Adrenal gland (tissue), 19 donors: ENCODE measurements at regions of chr1 and their contacts with region 1.

Region 1: DNA sequence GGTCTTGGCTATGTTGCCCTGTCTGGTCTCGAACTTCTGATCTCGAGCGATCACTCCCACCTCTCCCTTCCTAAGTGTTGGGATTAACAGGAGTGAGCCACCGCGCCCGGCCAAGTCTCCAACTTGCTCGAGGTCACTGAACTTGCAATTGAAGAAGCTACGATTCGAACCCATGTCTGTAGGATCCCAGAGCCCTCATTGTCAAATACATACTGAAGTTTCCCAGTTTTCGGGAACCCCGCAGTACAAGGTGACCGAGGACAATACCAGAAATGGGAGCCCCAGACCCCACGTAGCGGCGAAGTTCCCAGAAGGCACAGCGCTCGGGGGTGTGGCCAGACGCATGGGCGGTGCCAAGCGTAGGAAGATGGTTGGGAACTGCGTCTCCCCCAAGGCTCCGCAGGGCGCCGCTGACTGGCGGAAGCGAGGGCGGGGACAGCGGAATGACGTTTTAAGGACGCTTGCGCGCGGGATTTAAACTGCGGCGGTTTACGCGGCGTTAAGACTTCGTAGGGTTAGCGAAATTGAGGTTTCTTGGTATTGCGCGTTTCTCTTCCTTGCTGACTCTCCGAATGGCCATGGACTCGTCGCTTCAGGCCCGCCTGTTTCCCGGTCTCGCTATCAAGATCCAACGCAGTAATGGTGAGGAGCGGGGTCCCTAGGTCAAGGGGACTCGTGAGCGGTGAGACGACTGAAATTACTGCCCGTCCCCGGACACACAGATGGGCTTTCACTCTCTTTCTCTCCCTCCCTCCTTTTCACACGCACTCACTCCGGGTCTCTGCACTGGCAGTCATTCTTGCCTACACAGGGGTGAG is at the start of gene KIF2C:
- DNase-seq: peak; percentile 95 to 98 (median 97)
- H3K4me3 ChIP-seq: peak within 1 kb of the TSS in 3 of 4 donors; percentile 1 to 69 (median 33)
- H3K27ac ChIP-seq: peak within 1 kb of the TSS in 4 of 5 donors; percentile 61 to 92 (median 89)
- H3K4me1 ChIP-seq: peaks cover 6 to 11% of the 10 kb centered on the region in 2 donors
- H3K27me3 ChIP-seq: no peaks in the 10 kb centered on the region
- CTCF ChIP-seq: peak in 1 of 6 experiments; percentile 19
- POLR2A ChIP-seq: peak in 1 of 2 donors; percentile 74
- total RNA-seq, gene KIF2C: 0.26 to 10.4 (median 1.6) TPM

Region 2: GRCh38 chr1:44674113-44675000 is 65.2 kb before region 1 on chr1 and contains the starts of genes ARMH1 and TMEM53:
- intact Hi-C with region 1: no loop called
- DNase-seq: peak; percentile 99 to 100 (median 100)
- H3K4me3 ChIP-seq: peak within 1 kb of the TSS in 3 of 4 donors; percentile 44 to 86 (median 62)
- H3K27ac ChIP-seq: peak within 1 kb of the TSS; percentile 75 to 99 (median 87)
- H3K4me1 ChIP-seq: peaks cover 31 to 70% of the 10 kb centered on the region in 2 donors
- H3K27me3 ChIP-seq: no peaks in the 10 kb centered on the region
- CTCF ChIP-seq: no peak
- POLR2A ChIP-seq: peak in 1 of 2 donors; percentile 64
- total RNA-seq, gene ARMH1: 0.18 to 12.4 (median 3.9) TPM
- total RNA-seq, gene TMEM53: 7.2 to 47.4 (median 13.0) TPM

Region 3: GRCh38 chr1:44775078-44775929 is 35.7 kb after region 1 on chr1 and contains the start of gene RPS8:
- intact Hi-C with region 1: loop called (anchors 5 to 10 kb)
- DNase-seq: peak; percentile 91 to 98 (median 94)
- H3K4me3 ChIP-seq: peak within 1 kb of the TSS; percentile 13 to 97 (median 80)
- H3K27ac ChIP-seq: peak within 1 kb of the TSS; percentile 94 to 99 (median 97)
- H3K4me1 ChIP-seq: peaks cover 21 to 33% of the 10 kb centered on the region in 2 donors
- H3K27me3 ChIP-seq: no peaks in the 10 kb centered on the region
- CTCF ChIP-seq: no peak
- POLR2A ChIP-seq: peak; percentile 91 to 97
- total RNA-seq, gene RPS8: 1,508 to 2,877 (median 2,470) TPM

Region 4: GRCh38 chr1:44949286-44949685 is 209.7 kb after region 1 on chr1:
- intact Hi-C with region 1: no loop called
- DNase-seq: no peak
- H3K4me3 ChIP-seq: no peak overlapping the region
- H3K27ac ChIP-seq: no peak overlapping the region
- H3K4me1 ChIP-seq: peaks cover 16 to 17% of the 10 kb centered on the region in 2 donors
- H3K27me3 ChIP-seq: no peaks in the 10 kb centered on the region
- CTCF ChIP-seq: no peak
- POLR2A ChIP-seq: no peak